Right ventricle myocardium inferior (tissue), 1 donor: ENCODE measurements at regions of chr6 and their contacts with region 1.

Region 1: GRCh38 chr6:13068586-13069210 is 259.6 kb downstream of the TBC1D7 start:
- DNase-seq: no peak
- ATAC-seq: no peak

Region 2: GRCh38 chr6:12241493-12242175 is 827.1 kb before region 1 on chr6:
- intact Hi-C with region 1: no loop called
- DNase-seq: no peak
- ATAC-seq: no peak

Region 3: GRCh38 chr6:13026557-13026956 is 42.1 kb before region 1 on chr6:
- intact Hi-C with region 1: loop called (anchors 5 kb)
- DNase-seq: no peak
- ATAC-seq: peak; percentile 79